ENCODE measurements at regions of chr15 and their contacts with region 1.

Region 1: GRCh38 chr15:40893733-40894688 is at the start of gene VPS18:
- DNase-seq: peak; percentile 99
- H3K4me3 Mint-ChIP-seq: peak within 1 kb of the TSS; percentile 97
- H3K27ac Mint-ChIP-seq: peak within 1 kb of the TSS; percentile 79
- H3K4me1 Mint-ChIP-seq: peaks cover 28% of the 10 kb centered on the region
- H3K27me3 Mint-ChIP-seq: no peaks in the 10 kb centered on the region
- total RNA-seq, gene VPS18: 3.3 to 3.4 TPM

Region 2: GRCh38 chr15:40593588-40594428 is 300.2 kb before region 1 on chr15 and contains the start of gene KNL1:
- CTCF ChIA-PET with region 1: interaction called, 4 read pairs
- intact Hi-C with region 1: loop called (anchors 2 kb)
- DNase-seq: peak; percentile 95
- H3K4me3 Mint-ChIP-seq: peak within 1 kb of the TSS; percentile 97
- H3K27ac Mint-ChIP-seq: peak within 1 kb of the TSS; percentile 99
- H3K4me1 Mint-ChIP-seq: peaks cover 23% of the 10 kb centered on the region
- H3K27me3 Mint-ChIP-seq: peaks cover 5% of the 10 kb centered on the region
- total RNA-seq, gene KNL1: 31.0 to 32.7 TPM

Region 3: DNA sequence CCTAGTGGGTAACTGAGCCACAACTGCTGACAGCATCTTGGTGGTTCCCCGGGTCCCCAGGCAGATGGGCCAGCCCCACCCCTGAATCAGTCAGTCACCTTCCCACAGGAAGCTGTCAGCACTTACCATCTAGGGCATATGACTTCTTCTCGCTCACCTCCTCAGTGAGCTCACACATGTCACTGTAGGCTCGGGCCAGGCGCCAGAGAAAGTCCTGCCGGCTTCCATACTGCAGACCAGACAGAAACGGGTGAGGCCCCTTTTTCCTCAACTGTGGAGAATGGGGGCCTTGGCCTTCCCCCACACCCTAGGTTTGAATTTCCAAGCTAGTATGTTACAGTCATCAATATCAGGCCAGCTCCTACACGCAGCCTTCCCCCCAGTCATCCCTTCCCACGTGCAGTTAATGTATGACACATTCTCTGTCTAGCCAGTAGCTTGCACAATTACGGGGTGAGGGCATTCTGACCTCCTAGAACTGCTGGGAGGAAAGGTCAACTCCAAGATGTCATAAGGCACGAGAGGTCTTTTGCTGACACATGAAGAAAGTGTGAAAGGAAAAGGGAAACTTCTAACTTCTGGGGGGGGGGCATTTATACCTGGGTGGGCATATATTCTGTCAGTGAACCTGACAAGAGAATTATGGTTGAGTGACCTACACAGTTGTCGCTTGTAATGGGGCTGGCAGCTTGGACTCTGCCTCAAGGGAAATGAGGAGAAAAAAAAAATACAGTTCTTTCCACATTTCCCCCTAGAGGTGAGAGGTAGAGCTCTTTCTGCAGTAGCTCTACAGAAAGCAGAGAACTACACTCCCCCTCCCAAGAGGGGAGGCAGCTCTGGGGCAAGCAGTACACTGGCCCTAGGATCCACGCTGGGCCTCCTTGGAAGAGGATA is 149.8 kb before region 1 on chr15:
- CTCF ChIA-PET with region 1: interaction called, 4 read pairs
- intact Hi-C with region 1: loop called (anchors 1 kb)
- DNase-seq: peak; percentile 81
- H3K4me3 Mint-ChIP-seq: no peak overlapping the region
- H3K27ac Mint-ChIP-seq: peak overlapping the region; percentile 48
- H3K4me1 Mint-ChIP-seq: peaks cover 15% of the 10 kb centered on the region
- H3K27me3 Mint-ChIP-seq: no peaks in the 10 kb centered on the region

Region 4: GRCh38 chr15:40807028-40807887 is 86.8 kb before region 1 on chr15 and contains the starts of genes DNAJC17 and ZFYVE19:
- CTCF ChIA-PET with region 1: no interaction called
- intact Hi-C with region 1: loop called (anchors 1 kb)
- DNase-seq: peak; percentile 97
- H3K4me3 Mint-ChIP-seq: peak within 1 kb of the TSS; percentile 86
- H3K27ac Mint-ChIP-seq: peak within 1 kb of the TSS; percentile 93
- H3K4me1 Mint-ChIP-seq: peaks cover 23% of the 10 kb centered on the region
- H3K27me3 Mint-ChIP-seq: no peaks in the 10 kb centered on the region
- total RNA-seq, gene DNAJC17: 25.9 to 28.1 TPM
- total RNA-seq, gene ZFYVE19: 15.4 to 17.0 TPM

Region 5: DNA sequence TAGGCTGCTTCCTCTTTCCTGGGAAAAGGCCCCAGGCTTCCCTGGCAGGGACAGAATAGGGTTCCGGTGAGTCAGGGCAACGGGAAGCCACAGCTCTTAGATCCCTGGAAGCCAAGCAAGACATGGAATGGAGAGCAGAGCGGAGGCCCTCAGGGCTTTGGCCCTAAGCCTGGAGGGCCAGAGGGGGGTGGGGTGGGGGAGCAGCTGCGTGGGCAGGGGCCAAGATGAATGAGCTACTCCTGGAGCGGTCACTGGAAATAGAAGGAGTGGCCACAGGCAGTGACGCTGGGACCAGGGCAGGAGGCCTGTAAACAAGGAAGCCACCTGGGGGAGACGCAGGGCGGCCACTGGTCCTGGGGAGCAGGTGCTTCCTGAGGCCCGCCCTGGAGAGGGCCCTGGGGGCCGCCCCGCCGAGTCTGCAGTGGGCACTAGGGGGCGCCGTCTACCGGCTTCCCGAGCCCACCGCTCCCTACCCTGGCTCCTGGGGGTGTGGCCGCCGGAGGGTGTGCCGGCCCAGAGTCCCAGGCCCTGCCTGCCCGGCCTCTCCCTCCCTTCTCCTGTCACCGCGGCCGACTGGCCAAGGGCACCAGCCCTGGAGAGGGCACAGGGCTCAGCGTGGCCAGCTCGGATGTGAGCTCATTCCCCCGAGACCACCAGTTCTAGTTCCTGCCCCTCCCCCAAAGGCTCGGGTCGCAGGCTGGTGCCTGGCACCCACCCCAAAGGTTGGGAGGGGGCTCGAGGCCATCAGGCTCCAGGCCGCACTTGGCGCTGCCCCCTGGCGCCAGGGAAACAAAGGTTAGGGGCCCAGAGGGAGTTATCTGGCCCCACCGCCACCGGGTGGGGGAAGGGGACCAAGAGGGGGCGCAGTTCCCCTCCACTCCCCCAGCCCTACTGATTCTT is 12.3 kb after region 1 on chr15:
- CTCF ChIA-PET with region 1: interaction called, 58 read pairs
- intact Hi-C with region 1: no loop called
- DNase-seq: peak; percentile 87
- H3K4me3 Mint-ChIP-seq: peak overlapping the region; percentile 73
- H3K27ac Mint-ChIP-seq: peak overlapping the region; percentile 24
- H3K4me1 Mint-ChIP-seq: peaks cover 21% of the 10 kb centered on the region
- H3K27me3 Mint-ChIP-seq: no peaks in the 10 kb centered on the region

Region 6: GRCh38 chr15:40960926-40961325 is 66.9 kb after region 1 on chr15:
- CTCF ChIA-PET with region 1: no interaction called
- intact Hi-C with region 1: no loop called
- DNase-seq: no peak
- H3K4me3 Mint-ChIP-seq: no peak overlapping the region
- H3K27ac Mint-ChIP-seq: no peak overlapping the region
- H3K4me1 Mint-ChIP-seq: peaks cover 10% of the 10 kb centered on the region
- H3K27me3 Mint-ChIP-seq: no peaks in the 10 kb centered on the region

Region 7: DNA sequence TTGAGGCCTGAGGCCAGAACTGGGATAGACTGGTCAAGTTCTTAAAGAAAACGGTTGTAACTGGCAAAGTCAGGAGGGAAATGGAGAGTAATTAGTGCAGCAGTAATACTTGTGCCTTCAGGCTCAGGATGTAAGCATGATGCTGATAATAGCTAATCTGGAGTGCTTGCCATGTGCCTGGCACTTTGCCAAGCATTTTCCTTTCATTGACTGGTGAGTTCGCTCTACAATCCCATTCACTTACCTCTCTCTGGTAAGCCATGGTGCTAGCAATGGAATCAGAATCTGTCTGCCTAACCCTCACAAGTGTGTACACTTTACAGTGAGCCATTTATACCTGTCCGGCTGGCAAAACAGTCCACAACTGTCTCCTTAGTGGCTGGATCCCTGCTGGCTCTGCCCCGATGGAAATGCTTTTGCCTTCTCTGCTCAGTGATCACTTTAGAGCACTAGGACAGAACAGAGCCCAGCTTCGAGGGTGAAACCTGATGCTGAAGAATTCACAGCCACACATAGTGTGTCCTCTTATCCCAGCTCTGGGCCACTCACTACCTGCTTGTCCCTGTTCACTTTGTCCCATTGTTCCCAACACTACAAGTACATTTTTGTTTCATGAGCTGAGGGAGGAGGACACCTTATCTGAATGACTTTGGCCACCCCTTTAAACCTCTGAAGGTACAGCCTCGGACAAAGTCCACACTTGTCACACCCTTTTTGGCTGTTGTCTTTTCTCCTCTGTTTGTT is 347.4 kb after region 1 on chr15:
- CTCF ChIA-PET with region 1: no interaction called
- intact Hi-C with region 1: no loop called
- DNase-seq: no peak
- H3K4me3 Mint-ChIP-seq: no peak overlapping the region
- H3K27ac Mint-ChIP-seq: no peak overlapping the region
- H3K4me1 Mint-ChIP-seq: no peaks in the 10 kb centered on the region
- H3K27me3 Mint-ChIP-seq: no peaks in the 10 kb centered on the region

Region 8: DNA sequence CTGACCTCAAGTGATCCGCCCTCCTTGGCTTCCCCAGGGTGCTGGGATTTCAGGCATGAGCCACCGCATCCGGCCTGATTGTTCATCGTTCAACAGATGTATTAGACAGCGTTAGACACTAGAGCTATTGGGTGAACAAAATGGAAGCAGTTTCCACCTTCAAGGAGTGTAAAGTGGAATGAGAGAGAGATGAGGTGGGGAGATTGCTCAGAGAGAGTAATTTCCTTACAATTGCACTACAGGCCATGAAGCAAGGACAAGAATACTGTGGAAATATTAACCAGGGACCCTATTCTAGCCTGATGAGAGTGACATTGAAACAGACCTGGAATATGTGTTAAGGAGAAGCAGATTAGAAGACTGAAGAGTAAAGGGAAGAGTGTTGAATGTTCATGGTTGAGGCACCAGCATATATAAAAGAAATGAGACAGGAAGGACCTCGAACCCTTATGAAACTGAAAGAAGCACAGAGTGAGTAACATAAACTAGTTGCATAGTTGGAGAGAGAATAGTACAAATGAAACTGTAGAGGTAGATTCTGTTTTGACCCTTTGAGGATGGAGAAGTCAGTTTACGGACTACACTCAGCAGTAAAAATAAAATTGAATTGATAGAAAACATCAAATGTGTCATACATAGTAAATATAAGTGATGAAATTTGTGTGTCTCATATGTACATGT is 530.1 kb after region 1 on chr15:
- CTCF ChIA-PET with region 1: no interaction called
- intact Hi-C with region 1: no loop called
- DNase-seq: no peak
- H3K4me3 Mint-ChIP-seq: no peak overlapping the region
- H3K27ac Mint-ChIP-seq: peak overlapping the region; percentile 3
- H3K4me1 Mint-ChIP-seq: peaks cover 34% of the 10 kb centered on the region
- H3K27me3 Mint-ChIP-seq: no peaks in the 10 kb centered on the region

Measured in activated naive CD4-positive, alpha-beta T cell treated with anti-CD3 and anti-CD28 coated beads for 36 hours (primary cell).